HEK293 (cell line): ENCODE measurements at regions of chr9 and their contacts with region 1.

Region 1: DNA sequence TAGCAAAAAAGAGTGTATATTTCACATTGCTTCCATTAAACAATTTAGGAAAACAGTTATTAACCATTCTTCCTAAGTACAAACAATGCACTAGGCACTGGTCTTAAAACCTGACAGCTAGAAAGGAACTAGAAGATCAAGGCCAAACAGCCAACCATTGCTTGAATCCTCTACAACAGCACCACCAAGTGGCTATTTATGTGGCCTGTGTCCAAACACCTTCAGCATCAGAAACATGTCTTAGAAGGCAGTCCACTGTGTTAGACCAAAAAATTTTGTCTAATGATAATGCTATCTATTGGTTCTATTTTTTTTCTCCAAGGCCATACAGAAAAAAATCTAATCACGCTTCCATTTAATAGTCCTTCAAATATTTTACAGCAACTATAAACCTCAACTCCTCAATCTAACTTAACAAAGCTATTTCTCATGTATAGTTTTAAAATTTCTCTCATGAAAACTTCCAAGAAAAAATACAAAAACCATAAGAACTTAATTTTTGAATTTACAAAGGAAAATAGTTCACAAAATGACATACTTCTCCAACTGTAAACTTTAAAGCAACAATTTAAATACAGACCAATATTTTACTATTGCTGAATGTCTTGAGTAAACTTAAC is 36.1 kb downstream of the CAAP1 start:
- H3K4me3 ChIP-seq: no peak overlapping the region
- H3K27ac ChIP-seq: no peak overlapping the region
- H3K4me1 ChIP-seq: no peaks in the 10 kb centered on the region
- CTCF ChIP-seq: 0 out of 2 replicates have a peak, but pooled peaks have one; percentile 21

Region 2: GRCh38 chr9:26744191-26744965 is 112.1 kb before region 1 on chr9:
- CTCF ChIA-PET with region 1: interaction called, 22 read pairs
- POLR2A ChIA-PET with region 1: no interaction called
- H3K4me3 ChIP-seq: no peak overlapping the region
- H3K27ac ChIP-seq: no peak overlapping the region
- H3K4me1 ChIP-seq: no peaks in the 10 kb centered on the region
- CTCF ChIP-seq: no peak

Region 3: GRCh38 chr9:27053369-27054022 is 197.0 kb after region 1 on chr9:
- CTCF ChIA-PET with region 1: no interaction called
- POLR2A ChIA-PET with region 1: no interaction called
- H3K4me3 ChIP-seq: no peak overlapping the region
- H3K27ac ChIP-seq: no peak overlapping the region
- H3K4me1 ChIP-seq: no peaks in the 10 kb centered on the region
- CTCF ChIP-seq: no peak